Lower leg skin (tissue), 4 donors: ENCODE measurements at regions of chr3 and their contacts with region 1.

Region 1: GRCh38 chr3:51501833-51502561 is 2.2 kb upstream of the DCAF1 start:
- DNase-seq: peak; percentile 78 to 96
- H3K4me3 ChIP-seq: no peak overlapping the region
- CTCF ChIP-seq: peak in 1 of 3 donors; percentile 67
- POLR2A ChIP-seq: no peak

Region 2: DNA sequence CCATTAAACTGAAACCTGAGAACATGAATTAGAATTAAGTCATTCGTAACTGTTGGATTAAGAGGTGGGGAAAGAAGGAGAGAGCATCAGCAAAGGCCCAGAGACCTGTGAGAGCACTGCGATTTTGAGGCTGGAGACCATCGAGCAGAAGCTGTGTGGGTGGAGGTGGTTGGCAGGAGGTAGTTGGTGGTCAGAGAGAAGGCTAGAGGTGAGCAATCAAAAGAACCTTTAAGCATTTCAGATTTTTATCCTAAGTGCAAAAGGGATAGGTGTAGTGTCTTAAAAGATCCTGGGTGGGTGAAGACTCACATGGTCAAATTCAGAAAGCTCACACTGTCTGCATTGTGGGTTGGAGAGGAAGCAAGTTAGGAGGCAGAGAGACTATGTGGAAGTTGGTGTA is 103.9 kb after region 1 on chr3:
- intact Hi-C with region 1: no loop called
- DNase-seq: no peak
- H3K4me3 ChIP-seq: no peak overlapping the region
- CTCF ChIP-seq: no peak
- POLR2A ChIP-seq: no peak

Region 3: GRCh38 chr3:51670823-51671733 is 169.1 kb after region 1 on chr3 and contains the start of gene TEX264:
- intact Hi-C with region 1: loop called (anchors 5 kb)
- DNase-seq: peak; percentile 83 to 97
- H3K4me3 ChIP-seq: peak within 1 kb of the TSS; percentile 75
- CTCF ChIP-seq: no peak
- POLR2A ChIP-seq: no peak
- total RNA-seq, gene TEX264: 103 to 232 (median 134) TPM

Region 4: DNA sequence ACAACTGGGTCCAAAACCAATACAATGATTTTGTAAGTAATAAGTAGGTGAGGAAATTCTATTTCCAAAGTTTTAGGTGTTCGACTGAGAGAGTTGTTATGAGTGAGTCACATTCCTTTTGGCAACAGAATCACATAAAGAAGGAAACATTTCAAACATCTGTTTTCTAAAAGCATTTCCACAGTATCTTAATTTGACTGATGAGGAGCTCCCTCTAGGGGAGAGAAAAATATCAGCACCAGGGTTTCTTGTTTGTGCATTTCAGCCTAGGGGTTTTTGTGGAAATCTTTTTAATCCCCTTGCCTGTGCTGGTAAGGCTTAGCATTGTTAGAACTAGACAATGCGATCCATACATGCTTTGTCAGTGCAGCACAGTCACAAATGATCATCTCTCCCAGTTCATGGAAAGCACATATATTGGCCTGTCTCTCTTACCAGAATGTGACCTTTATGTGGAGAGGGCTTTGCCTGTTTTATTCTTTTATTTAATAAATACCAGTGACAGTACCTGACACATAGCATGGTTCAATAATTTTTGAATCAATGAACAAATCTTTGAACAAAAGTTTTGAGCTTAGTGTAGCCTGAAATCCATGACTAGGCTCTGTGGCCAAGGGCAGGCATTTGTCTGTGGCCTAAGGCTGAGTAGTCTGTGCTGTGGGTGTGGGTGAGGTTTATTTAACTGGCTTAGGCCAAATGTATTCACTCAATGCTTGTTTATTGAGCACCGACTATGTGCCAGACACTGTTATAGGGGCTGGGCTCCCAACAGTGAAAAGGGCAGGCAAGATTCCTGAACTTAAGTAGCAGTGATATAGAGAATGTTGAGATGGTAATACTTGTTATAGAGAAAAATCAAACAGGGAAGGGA is 298.1 kb after region 1 on chr3:
- intact Hi-C with region 1: loop called (anchors 10 kb)
- DNase-seq: no peak
- H3K4me3 ChIP-seq: no peak overlapping the region
- CTCF ChIP-seq: no peak
- POLR2A ChIP-seq: no peak

Region 5: DNA sequence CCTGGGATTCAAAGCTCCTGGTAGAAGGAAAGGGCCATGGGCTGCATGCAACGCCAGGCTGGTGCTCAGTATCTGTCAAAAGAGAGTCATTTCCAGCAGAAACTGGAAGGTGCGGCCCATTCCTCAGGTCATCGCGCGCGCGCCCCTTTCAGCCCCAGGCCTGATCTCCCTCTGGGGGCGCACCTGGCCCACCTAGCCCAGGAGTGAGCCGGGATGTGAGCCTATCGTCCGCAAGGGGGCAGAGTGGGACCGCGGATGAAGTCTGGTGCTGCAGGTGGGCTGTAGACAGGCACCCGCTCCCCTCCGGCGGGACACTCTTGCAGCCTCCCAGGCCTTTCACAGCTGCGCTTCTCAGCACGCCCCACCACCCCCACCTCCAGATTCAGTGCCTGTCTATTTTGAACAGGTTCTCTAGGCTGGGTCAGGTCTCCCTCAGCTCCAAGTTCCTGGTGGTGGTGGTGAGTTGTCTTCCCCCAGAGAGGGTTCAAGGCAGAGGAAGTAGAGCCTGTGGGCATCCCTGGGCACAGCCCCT is 499.5 kb after region 1 on chr3:
- intact Hi-C with region 1: no loop called
- DNase-seq: peak; percentile 67 to 95
- H3K4me3 ChIP-seq: no peak overlapping the region
- CTCF ChIP-seq: peak in 1 of 3 donors; percentile 86
- POLR2A ChIP-seq: no peak